Panc1 (cell line): ENCODE measurements at regions of chr1 and their contacts with region 1.

Region 1: DNA sequence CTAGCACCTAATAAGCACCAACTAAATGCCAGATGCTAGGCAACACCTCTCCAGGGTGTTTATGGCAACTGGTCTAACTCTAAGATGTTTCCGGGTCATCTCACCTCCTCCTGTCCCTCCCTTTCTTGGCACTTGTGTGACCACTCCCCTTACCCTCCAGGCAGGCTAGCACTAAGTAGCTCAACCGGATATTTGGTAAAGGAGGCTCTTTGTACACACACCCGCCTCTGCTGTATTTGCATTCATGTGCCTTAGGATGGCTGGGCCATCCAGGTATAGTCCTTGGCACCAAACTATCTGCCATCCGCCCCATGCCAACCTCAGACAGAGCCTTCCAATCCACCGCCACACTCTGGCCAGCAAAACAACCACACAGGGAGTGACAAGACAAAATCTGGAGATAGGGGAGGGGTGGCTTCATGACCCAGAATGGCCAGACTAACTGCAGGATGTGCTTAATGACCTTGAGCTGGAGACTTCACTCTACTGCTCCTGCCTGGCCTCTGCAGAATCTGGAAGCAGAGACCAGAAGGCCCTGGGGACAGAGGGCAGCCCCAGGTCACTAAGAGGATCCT is 59.5 kb downstream of the CDK18 start:
- DNase-seq: no peak
- ATAC-seq: no peak
- H3K4me3 ChIP-seq: no peak overlapping the region
- H3K27ac ChIP-seq: no peak overlapping the region
- H3K4me1 ChIP-seq: no peaks in the 10 kb centered on the region
- H3K27me3 ChIP-seq: peaks cover 25% of the 10 kb centered on the region
- CTCF ChIP-seq: no peak

Region 2: GRCh38 chr1:205645519-205645918 is 81.6 kb after region 1 on chr1:
- CTCF ChIA-PET with region 1: no interaction called
- POLR2A ChIA-PET with region 1: interaction called, 15 read pairs
- in situ Hi-C with region 1: no loop called
- intact Hi-C with region 1: no loop called
- DNase-seq: no peak
- ATAC-seq: no peak
- H3K4me3 ChIP-seq: no peak overlapping the region
- H3K27ac ChIP-seq: no peak overlapping the region
- H3K4me1 ChIP-seq: no peaks in the 10 kb centered on the region
- H3K27me3 ChIP-seq: no peaks in the 10 kb centered on the region
- CTCF ChIP-seq: no peak